Dendritic cell treated with granulocyte-macrophage colony-stimulating factor and Interleukin-4, amounts not matched to agents 40 ng/mL and 50 ng/mL, for 4 days (primary cell): ENCODE measurements at regions of chr12 and their contacts with region 1.

Region 1: GRCh38 chr12:89179983-89180382 is 172.3 kb downstream of the DUSP6 start:
- H3K4me3 Mint-ChIP-seq: no peak overlapping the region
- H3K27ac Mint-ChIP-seq: peak overlapping the region; percentile 28
- H3K4me1 Mint-ChIP-seq: peaks cover 33% of the 10 kb centered on the region
- H3K27me3 Mint-ChIP-seq: no peaks in the 10 kb centered on the region

Region 2: DNA sequence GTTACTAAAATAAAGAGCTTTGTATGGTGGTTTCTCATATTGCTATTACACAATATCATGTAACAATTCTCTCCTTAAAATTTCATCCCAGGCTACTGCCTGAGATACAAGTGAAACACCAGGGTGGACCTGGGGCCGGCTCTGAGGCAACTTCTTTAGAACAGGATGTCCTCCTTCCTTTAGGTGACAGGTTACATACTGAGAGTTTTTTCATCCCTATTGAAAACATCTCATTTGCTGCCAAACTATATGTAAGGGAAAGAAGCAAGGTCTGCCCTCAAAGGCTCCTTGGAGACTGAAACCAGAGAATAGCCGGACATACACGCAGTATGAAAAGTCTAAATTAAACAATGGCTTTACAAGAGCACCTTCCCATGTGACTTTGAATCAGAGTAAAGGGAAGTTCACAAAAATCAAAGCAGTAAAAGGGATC is 32.4 kb after region 1 on chr12:
- intact Hi-C with region 1: loop called (anchors 5 kb)
- H3K4me3 Mint-ChIP-seq: no peak overlapping the region
- H3K27ac Mint-ChIP-seq: no peak overlapping the region
- H3K4me1 Mint-ChIP-seq: peaks cover 30% of the 10 kb centered on the region
- H3K27me3 Mint-ChIP-seq: no peaks in the 10 kb centered on the region

Region 3: DNA sequence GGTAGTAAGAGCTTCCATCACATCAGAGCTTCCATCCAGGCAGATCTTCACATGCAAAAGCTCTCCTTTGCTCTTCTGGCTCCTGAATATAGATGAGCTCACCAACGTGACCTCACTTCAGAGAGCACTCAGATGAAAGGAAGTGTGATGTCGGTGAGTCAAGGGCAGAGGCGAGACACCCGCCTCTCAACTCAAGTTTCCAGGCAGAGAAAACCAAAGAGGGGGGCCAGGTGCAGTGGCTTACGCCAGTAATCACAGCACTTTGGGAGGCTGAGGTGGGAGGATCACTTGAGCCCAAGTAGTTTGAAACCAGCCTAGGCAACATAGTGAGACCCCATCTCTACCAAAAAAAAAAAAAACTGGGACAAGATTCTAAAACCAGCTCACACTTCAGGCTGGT is 45.4 kb after region 1 on chr12:
- intact Hi-C with region 1: no loop called
- H3K4me3 Mint-ChIP-seq: no peak overlapping the region
- H3K27ac Mint-ChIP-seq: peak overlapping the region; percentile 13
- H3K4me1 Mint-ChIP-seq: peaks cover 26% of the 10 kb centered on the region
- H3K27me3 Mint-ChIP-seq: no peaks in the 10 kb centered on the region